ENCODE measurements at regions of chr16 and their contacts with region 1.

Region 1: DNA sequence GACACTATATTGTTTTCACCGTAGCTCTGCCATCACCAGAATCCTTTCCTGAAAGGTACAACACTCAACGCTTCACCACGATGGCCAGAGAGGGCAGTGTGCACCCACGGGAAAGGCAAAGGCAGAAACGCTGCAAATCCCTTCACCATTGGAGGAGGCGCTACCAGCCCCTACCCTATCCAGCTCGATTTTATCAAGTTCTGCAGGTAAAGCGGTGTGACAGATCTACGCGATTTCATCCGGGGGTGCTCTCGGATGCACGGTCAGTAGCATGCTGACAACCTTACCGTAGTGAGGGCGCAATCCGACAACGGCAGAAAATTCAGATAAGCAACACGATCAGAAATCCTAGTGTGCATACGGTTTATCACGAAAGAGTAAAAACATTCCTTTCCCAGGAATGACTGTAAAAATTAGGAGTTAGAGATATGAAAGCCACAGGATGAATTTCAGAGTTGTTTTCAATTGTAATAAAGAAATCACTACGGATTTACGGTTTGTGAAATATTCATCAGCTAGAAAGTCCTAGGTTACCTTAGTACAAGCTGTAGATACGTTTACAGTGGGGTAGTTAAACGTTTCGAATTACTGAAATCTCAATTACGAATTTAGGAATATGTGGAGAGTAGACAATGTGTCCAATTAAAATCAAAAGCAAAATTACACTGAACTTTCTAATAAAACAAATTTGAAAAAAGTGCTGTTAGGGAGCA is 1.8 kb downstream of the NETO2 start:
- DNase-seq: peak; percentile 81
- ATAC-seq: peak; percentile 76
- H3K4me3 ChIP-seq: peak overlapping the region; percentile 64 to 71
- H3K27ac ChIP-seq: peak overlapping the region; percentile 79
- H3K4me1 ChIP-seq: peaks cover 37% of the 10 kb centered on the region
- H3K27me3 ChIP-seq: no peaks in the 10 kb centered on the region
- CTCF ChIP-seq: peak; percentile 92

Region 2: GRCh38 chr16:47045023-47045422 is 96.9 kb before region 1 on chr16:
- CTCF ChIA-PET with region 1: no interaction called
- POLR2A ChIA-PET with region 1: no interaction called
- in situ Hi-C with region 1: no loop called
- intact Hi-C with region 1: loop called (anchors 10 kb)
- DNase-seq: no peak
- ATAC-seq: no peak
- H3K4me3 ChIP-seq: no peak overlapping the region
- H3K27ac ChIP-seq: no peak overlapping the region
- H3K4me1 ChIP-seq: no peaks in the 10 kb centered on the region
- H3K27me3 ChIP-seq: no peaks in the 10 kb centered on the region
- CTCF ChIP-seq: no peak

Region 3: DNA sequence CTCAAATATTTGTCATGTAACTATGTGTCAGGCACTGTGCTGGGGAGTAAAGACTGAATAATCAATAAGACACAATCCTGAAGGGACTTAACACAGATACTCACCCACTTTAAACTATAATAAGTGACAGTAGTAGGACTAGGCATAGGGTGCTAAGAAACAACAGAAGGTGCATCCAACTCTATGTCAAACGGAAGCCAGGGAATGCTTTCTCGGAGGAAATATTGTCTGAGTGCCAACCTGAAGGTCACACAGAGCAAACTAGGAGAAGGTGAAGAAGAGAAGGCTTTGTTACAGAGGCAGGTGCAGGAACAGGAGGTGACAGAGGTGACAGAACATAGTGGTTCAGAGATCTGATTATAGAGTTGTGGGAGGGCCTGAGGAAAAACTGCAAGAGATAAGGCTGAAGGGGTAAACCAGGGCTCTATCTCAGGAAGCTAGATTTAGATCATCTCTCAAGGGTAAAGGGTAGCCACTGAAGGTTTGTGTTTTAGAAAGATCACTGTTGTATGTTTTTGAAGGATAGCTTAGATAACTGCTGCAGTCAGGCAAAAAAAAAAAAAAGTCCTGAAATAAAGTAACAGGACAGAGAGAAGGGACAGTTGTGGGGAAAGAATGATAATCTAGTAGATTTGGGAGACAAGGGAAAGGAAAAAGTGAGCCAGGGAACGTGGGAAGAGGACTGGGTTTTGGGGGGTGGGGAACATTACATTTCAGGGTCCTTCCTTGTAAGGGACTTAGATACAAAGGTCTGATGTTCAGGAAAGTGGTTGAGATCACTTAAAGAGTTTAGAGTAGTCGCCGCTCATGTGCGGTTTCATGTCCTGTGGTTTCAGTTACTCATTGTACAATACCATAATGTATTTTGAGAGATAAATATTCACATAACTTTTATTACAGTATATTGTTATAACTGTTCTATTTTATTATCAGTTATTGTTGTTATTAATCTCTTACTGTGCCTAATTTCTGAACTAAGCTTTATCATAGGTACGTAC is 87.4 kb after region 1 on chr16:
- CTCF ChIA-PET with region 1: no interaction called
- POLR2A ChIA-PET with region 1: no interaction called
- in situ Hi-C with region 1: no loop called
- intact Hi-C with region 1: no loop called
- DNase-seq: no peak
- ATAC-seq: no peak
- H3K4me3 ChIP-seq: no peak overlapping the region
- H3K27ac ChIP-seq: no peak overlapping the region
- H3K4me1 ChIP-seq: no peaks in the 10 kb centered on the region
- H3K27me3 ChIP-seq: no peaks in the 10 kb centered on the region
- CTCF ChIP-seq: no peak

Region 4: GRCh38 chr16:47247690-47248089 is 105.8 kb after region 1 on chr16:
- CTCF ChIA-PET with region 1: no interaction called
- POLR2A ChIA-PET with region 1: no interaction called
- in situ Hi-C with region 1: no loop called
- intact Hi-C with region 1: no loop called
- DNase-seq: no peak
- ATAC-seq: no peak
- H3K4me3 ChIP-seq: no peak overlapping the region
- H3K27ac ChIP-seq: no peak overlapping the region
- H3K4me1 ChIP-seq: no peaks in the 10 kb centered on the region
- H3K27me3 ChIP-seq: no peaks in the 10 kb centered on the region
- CTCF ChIP-seq: no peak

Region 5: DNA sequence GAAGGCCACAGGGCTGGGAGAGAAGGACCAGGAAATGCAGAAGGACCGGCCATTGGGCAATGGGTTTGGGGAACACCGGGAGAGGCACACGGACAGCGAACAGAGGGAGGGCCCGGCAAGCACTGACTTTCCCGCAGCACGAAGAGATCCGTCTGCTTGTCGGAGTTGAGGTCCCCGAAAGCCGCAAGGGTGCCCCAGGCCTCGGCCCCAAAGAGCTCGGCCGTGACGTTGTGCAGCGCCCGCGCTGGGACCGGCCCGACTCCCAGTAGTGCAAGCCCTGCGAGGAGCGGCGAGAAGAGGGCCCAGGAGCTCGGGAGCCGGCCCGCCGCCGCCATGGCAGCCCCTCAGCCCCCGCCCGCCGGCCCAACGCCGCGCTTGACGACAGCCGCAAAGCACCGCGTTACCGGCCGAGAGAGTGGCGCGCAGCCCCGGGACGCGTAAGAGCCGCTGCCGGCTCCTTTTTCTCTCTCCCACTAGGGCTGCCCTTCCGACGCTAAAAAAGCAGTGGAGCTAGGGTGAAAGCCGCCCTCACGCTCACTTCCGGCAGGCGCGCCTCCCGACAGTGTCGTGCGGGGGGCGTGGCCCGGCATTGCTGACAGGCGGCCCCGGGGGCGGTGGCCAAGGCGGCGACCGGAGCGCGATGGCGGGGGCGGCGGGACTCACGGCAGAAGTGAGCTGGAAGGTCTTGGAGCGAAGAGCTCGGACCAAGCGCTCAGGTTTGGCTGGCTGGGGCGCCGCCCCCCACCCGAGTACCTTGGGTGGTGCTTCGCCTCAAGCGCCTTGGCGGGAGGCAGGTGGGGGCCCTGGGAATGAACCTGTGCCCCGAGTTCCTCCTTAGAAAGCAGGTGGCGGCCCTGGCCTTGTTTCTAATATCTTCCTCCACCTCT is 319.0 kb after region 1 on chr16 and contains the starts of genes ITFG1 and PHKB:
- CTCF ChIA-PET with region 1: no interaction called
- POLR2A ChIA-PET with region 1: no interaction called
- in situ Hi-C with region 1: no loop called
- intact Hi-C with region 1: loop called (anchors 10 kb)
- DNase-seq: no peak
- ATAC-seq: peak; percentile 93
- H3K4me3 ChIP-seq: peak within 1 kb of the TSS; percentile 81 to 86
- H3K27ac ChIP-seq: peak within 1 kb of the TSS; percentile 79
- H3K4me1 ChIP-seq: peaks cover 6% of the 10 kb centered on the region
- H3K27me3 ChIP-seq: no peaks in the 10 kb centered on the region
- CTCF ChIP-seq: no peak
- total RNA-seq, gene ITFG1: 26.5 TPM
- total RNA-seq, gene PHKB: 29.5 TPM

Region 6: GRCh38 chr16:48164907-48165726 is 1023.2 kb after region 1 on chr16:
- CTCF ChIA-PET with region 1: interaction called, 7 read pairs
- POLR2A ChIA-PET with region 1: no interaction called
- in situ Hi-C with region 1: no loop called
- intact Hi-C with region 1: loop called (anchors 5 kb)
- DNase-seq: peak; percentile 46
- ATAC-seq: peak; percentile 96
- H3K4me3 ChIP-seq: peak overlapping the region in 1 of 2 experiments; percentile 40; a peak in 2 of 4 replicates
- H3K27ac ChIP-seq: peak overlapping the region; percentile 39; the same call in 1 of the 2 replicates
- H3K4me1 ChIP-seq: peaks cover 6% of the 10 kb centered on the region
- H3K27me3 ChIP-seq: no peaks in the 10 kb centered on the region
- CTCF ChIP-seq: peak; percentile 81